Naive thymus-derived CD4-positive, alpha-beta T cell (primary cell): ENCODE measurements at regions of chr2 and their contacts with region 1.

Region 1: GRCh38 chr2:112692496-112692911 is 28.3 kb upstream of the NT5DC4 start:
- DNase-seq: peak in 3 of 9 donors; percentile 7 to 69 (median 16)
- ATAC-seq: peak; percentile 81
- H3K4me3 ChIP-seq: no peak overlapping the region
- H3K4me3 Mint-ChIP-seq: peak overlapping the region in 1 of 10 donors; percentile 78
- H3K27ac ChIP-seq: no peak overlapping the region
- H3K27ac Mint-ChIP-seq: peak overlapping the region in 6 of 9 donors; percentile 45 to 91 (median 56)
- H3K4me1 ChIP-seq: peaks cover 6 to 16% of the 10 kb centered on the region in 2 donors
- H3K4me1 Mint-ChIP-seq: peaks cover 0 to 38% (median 18%) of the 10 kb centered on the region in 7 donors
- H3K27me3 ChIP-seq: no peaks in the 10 kb centered on the region
- H3K27me3 Mint-ChIP-seq: no peaks in the 10 kb centered on the region

Region 2: DNA sequence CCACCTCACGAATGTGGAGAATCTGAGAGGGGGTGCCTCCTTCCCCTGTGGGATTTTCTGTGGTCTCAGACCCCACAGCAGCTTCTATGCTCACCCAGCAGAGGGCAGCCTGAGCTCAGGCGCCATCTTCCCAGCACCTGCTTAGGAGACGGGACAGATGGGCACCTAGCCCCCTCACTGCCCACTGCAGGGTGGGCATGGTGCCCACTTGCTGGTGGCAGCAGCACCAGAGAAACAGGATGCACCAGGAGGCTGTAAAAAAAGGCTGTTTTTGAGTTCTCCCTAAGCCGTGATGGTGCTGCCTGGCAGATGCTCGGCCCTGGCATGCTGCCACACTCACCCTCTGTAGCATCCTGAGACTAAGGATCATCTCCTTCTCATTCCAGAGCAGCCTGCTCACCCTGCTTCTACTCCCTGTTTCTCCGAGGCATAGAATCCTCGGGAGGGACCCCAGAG is 65.9 kb before region 1 on chr2:
- CTCF ChIA-PET with region 1: interaction called, 183 read pairs
- POLR2A ChIA-PET with region 1: interaction called, 26 read pairs
- intact Hi-C with region 1: loop called (anchors 1 kb)
- DNase-seq: peak; percentile 47 to 81 (median 67)
- ATAC-seq: peak; percentile 70
- H3K4me3 ChIP-seq: peak overlapping the region; percentile 61
- H3K4me3 Mint-ChIP-seq: peak overlapping the region; percentile 47 to 81 (median 72)
- H3K27ac ChIP-seq: peak overlapping the region; percentile 29
- H3K27ac Mint-ChIP-seq: peak overlapping the region in 8 of 9 donors; percentile 80 to 99 (median 94)
- H3K4me1 ChIP-seq: peaks cover 49 to 64% of the 10 kb centered on the region in 2 donors
- H3K4me1 Mint-ChIP-seq: peaks cover 34 to 88% (median 55%) of the 10 kb centered on the region in 7 donors
- H3K27me3 ChIP-seq: no peaks in the 10 kb centered on the region
- H3K27me3 Mint-ChIP-seq: no peaks in the 10 kb centered on the region

Region 3: GRCh38 chr2:112706170-112706664 is 13.7 kb after region 1 on chr2:
- CTCF ChIA-PET with region 1: no interaction called
- POLR2A ChIA-PET with region 1: no interaction called
- intact Hi-C with region 1: loop called in 1 of 2 experiments (anchors 1 kb)
- DNase-seq: peak in 4 of 9 donors; percentile 13 to 73 (median 32)
- ATAC-seq: peak; percentile 88
- H3K4me3 ChIP-seq: no peak overlapping the region
- H3K4me3 Mint-ChIP-seq: peak overlapping the region in 4 of 10 donors; percentile 22 to 76 (median 46)
- H3K27ac ChIP-seq: no peak overlapping the region
- H3K27ac Mint-ChIP-seq: peak overlapping the region in 3 of 9 donors; percentile 10 to 78 (median 60)
- H3K4me1 ChIP-seq: peaks cover 0 to 15% of the 10 kb centered on the region in 2 donors
- H3K4me1 Mint-ChIP-seq: peaks cover 7 to 57% (median 13%) of the 10 kb centered on the region in 7 donors
- H3K27me3 ChIP-seq: no peaks in the 10 kb centered on the region
- H3K27me3 Mint-ChIP-seq: peaks cover 0 to 12% (median 8%) of the 10 kb centered on the region in 5 donors

Region 4: DNA sequence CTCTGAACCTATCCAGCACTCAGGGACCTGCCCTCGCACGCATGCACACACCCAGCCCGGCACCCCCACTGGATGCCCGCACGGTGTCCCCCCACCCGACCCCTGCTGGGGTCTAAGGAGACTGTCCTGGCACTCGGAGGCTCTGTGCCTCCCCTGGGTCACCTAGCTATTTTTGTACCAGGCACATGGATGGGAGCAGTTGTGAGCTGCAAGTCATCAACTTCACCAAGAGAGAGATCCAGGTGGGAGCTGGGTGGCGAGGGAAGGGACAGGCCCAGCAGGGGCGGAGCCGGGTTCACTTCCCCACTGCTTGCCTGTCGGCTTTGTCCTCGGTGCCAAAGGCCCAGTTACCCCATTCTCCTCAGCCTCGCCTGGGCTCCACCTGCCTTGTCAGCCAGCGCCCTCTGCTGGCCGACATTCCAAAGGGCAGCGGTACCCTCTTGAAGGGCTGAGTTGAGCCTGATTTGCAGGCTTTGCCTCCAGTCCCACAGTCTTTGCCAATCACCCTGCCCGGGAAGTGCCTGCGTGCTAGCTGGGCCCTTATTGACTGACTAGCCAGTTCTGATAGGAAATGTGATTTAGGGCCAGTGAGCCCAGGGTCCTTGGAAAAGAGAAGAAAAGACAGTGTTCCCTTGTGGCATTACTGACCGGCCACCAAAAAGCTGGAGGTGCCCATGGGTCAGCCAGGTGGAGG is 34.1 kb after region 1 on chr2:
- CTCF ChIA-PET with region 1: interaction called, 33 read pairs
- POLR2A ChIA-PET with region 1: no interaction called
- intact Hi-C with region 1: loop called (anchors 1 kb)
- DNase-seq: peak; percentile 68 to 89 (median 83)
- ATAC-seq: peak; percentile 96
- H3K4me3 ChIP-seq: no peak overlapping the region
- H3K4me3 Mint-ChIP-seq: no peak overlapping the region
- H3K27ac ChIP-seq: no peak overlapping the region
- H3K27ac Mint-ChIP-seq: peak overlapping the region in 2 of 9 donors; percentile 51 to 73
- H3K4me1 ChIP-seq: no peaks in the 10 kb centered on the region
- H3K4me1 Mint-ChIP-seq: peaks cover 0 to 29% (median 0%) of the 10 kb centered on the region in 7 donors
- H3K27me3 ChIP-seq: no peaks in the 10 kb centered on the region
- H3K27me3 Mint-ChIP-seq: peaks cover 0 to 2% (median 0%) of the 10 kb centered on the region in 5 donors